HCT116 (cell line): ENCODE measurements at regions of chr2 and their contacts with region 1.

Region 1: GRCh38 chr2:74833418-74834233 is at the start of gene HK2:
- DNase-seq: peak; percentile 68
- ATAC-seq: peak; percentile 89
- H3K4me3 ChIP-seq: peak within 1 kb of the TSS; percentile 91 to 92
- H3K27ac ChIP-seq: peak within 1 kb of the TSS; percentile 73
- H3K4me1 ChIP-seq: peaks cover 14 to 32% of the 10 kb centered on the region in 2 experiments; a peak in 3 of 4 replicates
- H3K27me3 ChIP-seq: no peaks in the 10 kb centered on the region
- CTCF ChIP-seq: no peak
- POLR2A ChIP-seq: no peak
- RAD21 ChIP-seq: no peak
- total RNA-seq, gene HK2: 42.5 TPM

Region 2: DNA sequence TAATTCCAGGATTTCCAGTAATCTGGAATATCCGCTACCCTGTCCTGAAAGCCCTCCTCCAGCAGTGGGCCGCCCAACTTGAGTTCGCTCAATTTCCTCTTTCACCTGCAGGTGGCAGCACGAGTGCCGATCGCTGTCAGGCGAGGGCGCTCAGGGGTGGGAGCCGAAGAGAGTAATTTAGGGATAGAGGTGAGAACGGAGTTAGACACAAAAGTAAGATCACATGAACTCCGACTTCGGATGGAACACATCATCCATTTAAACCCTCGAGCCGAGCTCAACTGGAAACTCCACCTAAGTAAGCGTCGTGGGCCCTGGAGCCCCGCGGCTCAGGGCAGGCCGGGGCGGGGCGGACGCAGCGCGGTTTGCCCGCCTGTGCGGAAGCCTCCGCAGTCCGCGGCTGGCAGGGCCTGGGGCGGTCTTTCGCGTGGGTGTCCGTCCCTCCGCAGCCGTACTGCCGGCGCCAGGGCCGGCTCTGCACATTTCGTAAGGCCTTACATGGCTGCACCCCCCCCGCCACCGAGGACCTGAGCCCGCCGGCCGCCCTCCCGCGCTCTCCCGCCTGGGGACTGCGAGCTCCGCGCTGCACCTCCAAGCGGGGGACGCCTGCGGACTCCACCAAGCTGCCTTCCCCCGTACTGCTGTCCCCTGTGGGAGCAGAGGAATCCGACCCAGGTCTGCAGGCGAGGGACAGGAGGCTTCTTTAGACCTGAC is 118.4 kb before region 1 on chr2:
- CTCF ChIA-PET with region 1: interaction called, 4 read pairs
- POLR2A ChIA-PET with region 1: no interaction called
- RAD21 ChIA-PET with region 1: no interaction called
- intact Hi-C with region 1: loop called (anchors 1 kb)
- DNase-seq: peak; percentile 64
- ATAC-seq: peak; percentile 94
- H3K4me3 ChIP-seq: peak overlapping the region; percentile 45 to 67
- H3K27ac ChIP-seq: no peak overlapping the region; the same call in 1 of the 2 replicates
- H3K4me1 ChIP-seq: peaks cover 0 to 18% of the 10 kb centered on the region in 2 experiments; a peak in 2 of 4 replicates
- H3K27me3 ChIP-seq: no peaks in the 10 kb centered on the region
- CTCF ChIP-seq: peak; percentile 84 to 96 (median 95)
- POLR2A ChIP-seq: no peak
- RAD21 ChIP-seq: peak; percentile 89

Region 3: GRCh38 chr2:74740389-74741075 is 93.1 kb before region 1 on chr2:
- CTCF ChIA-PET with region 1: no interaction called
- POLR2A ChIA-PET with region 1: no interaction called
- RAD21 ChIA-PET with region 1: no interaction called
- intact Hi-C with region 1: loop called (anchors 2 kb)
- DNase-seq: peak; percentile 95
- ATAC-seq: peak; percentile 94
- H3K4me3 ChIP-seq: peak overlapping the region; percentile 4 to 22; a peak in 3 of 4 replicates
- H3K27ac ChIP-seq: peak overlapping the region; percentile 2; the same call in 1 of the 2 replicates
- H3K4me1 ChIP-seq: peaks cover 16 to 27% of the 10 kb centered on the region in 2 experiments
- H3K27me3 ChIP-seq: no peaks in the 10 kb centered on the region
- CTCF ChIP-seq: no peak
- POLR2A ChIP-seq: no peak
- RAD21 ChIP-seq: peak; percentile 48; the same call in 1 of the 2 replicates

Region 4: GRCh38 chr2:74778381-74779264 is 55.0 kb before region 1 on chr2:
- CTCF ChIA-PET with region 1: no interaction called
- POLR2A ChIA-PET with region 1: no interaction called
- RAD21 ChIA-PET with region 1: no interaction called
- intact Hi-C with region 1: no loop called
- DNase-seq: no peak
- ATAC-seq: 0 out of 2 replicates have a peak, but pooled peaks have one; percentile 34
- H3K4me3 ChIP-seq: no peak overlapping the region
- H3K27ac ChIP-seq: no peak overlapping the region
- H3K4me1 ChIP-seq: no peaks in the 10 kb centered on the region
- H3K27me3 ChIP-seq: no peaks in the 10 kb centered on the region
- CTCF ChIP-seq: no peak
- POLR2A ChIP-seq: no peak
- RAD21 ChIP-seq: no peak

Region 5: GRCh38 chr2:74864846-74865722 is 31.5 kb after region 1 on chr2:
- CTCF ChIA-PET with region 1: interaction called, 3 read pairs
- POLR2A ChIA-PET with region 1: interaction called, 5 read pairs
- RAD21 ChIA-PET with region 1: no interaction called
- intact Hi-C with region 1: loop called (anchors 1 kb)
- DNase-seq: peak; percentile 54
- ATAC-seq: peak; percentile 73
- H3K4me3 ChIP-seq: peak overlapping the region in 1 of 2 experiments; percentile 13; a peak in 2 of 4 replicates
- H3K27ac ChIP-seq: peak overlapping the region; percentile 74
- H3K4me1 ChIP-seq: peaks cover 62 to 71% of the 10 kb centered on the region in 2 experiments
- H3K27me3 ChIP-seq: no peaks in the 10 kb centered on the region
- CTCF ChIP-seq: peak in 1 of 3 experiments; percentile 18; a peak in 1 of 6 replicates
- POLR2A ChIP-seq: no peak
- RAD21 ChIP-seq: no peak

Region 6: DNA sequence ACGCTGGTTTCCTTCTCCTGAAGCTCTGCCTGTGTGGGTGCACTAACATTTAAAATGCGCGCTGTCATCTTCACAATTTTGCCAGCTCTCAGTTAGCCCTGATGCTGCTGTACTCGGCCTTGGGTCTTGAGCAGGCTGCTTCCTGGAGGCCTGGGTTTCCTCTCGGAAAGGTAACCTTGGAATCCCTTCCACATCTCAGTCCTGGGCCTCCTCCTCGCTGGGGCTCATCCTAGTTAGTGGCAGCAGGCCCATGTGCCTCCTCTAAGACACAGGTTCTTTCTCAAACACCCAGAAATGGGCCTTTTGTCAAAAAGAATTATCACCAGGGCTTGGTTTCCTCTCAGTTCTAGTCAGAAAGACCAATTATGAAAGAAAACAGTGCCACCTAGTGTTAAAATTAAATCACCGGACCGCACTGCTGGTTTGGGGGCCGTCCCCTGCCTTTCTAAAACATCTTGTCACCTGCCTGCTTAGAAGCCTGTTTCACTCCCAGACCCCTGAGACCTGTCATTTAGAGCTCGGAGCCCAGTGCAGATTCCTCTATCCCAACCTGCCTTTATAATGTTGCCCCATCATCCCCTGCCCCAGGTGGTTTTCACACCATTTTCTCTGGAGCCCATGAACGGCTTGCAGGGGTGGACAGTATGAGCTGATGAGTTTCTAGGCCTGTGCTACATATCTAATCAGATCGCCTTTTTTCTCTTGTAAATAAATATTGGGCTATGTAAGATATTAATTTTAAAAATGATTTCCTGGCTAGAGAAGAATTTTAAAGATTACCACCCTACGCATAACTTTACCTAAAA is 42.7 kb after region 1 on chr2:
- CTCF ChIA-PET with region 1: interaction called, 19 read pairs
- POLR2A ChIA-PET with region 1: no interaction called
- RAD21 ChIA-PET with region 1: no interaction called
- intact Hi-C with region 1: no loop called
- DNase-seq: no peak
- ATAC-seq: peak; percentile 89
- H3K4me3 ChIP-seq: no peak overlapping the region
- H3K27ac ChIP-seq: peak overlapping the region; percentile 18; the same call in 1 of the 2 replicates
- H3K4me1 ChIP-seq: no peaks in the 10 kb centered on the region
- H3K27me3 ChIP-seq: no peaks in the 10 kb centered on the region
- CTCF ChIP-seq: peak; percentile 40 to 77 (median 77)
- POLR2A ChIP-seq: no peak
- RAD21 ChIP-seq: peak; percentile 83